ENCODE measurements at regions of chr14 and their contacts with region 1.

Region 1: GRCh38 chr14:77023001-77023996 is 5.2 kb downstream of the IRF2BPL start:
- DNase-seq: peak; percentile 70
- H3K4me3 ChIP-seq: peak overlapping the region; percentile 21 to 77; a peak in 3 of 4 replicates
- H3K27ac ChIP-seq: peak overlapping the region; percentile 74 to 96
- H3K4me1 ChIP-seq: peaks cover 26 to 30% of the 10 kb centered on the region in 2 experiments
- H3K27me3 ChIP-seq: no peaks in the 10 kb centered on the region
- CTCF ChIP-seq: peak; percentile 37; the same call in 1 of the 2 replicates
- EP300 ChIP-seq: no peak
- RAD21 ChIP-seq: peak; percentile 50

Region 2: GRCh38 chr14:76977793-76978720 is 45.2 kb before region 1 on chr14:
- CTCF ChIA-PET with region 1: no interaction called
- POLR2A ChIA-PET with region 1: no interaction called
- DNase-seq: peak; percentile 47
- H3K4me3 ChIP-seq: no peak overlapping the region
- H3K27ac ChIP-seq: peak overlapping the region in 1 of 2 experiments; percentile 28; a peak in 1 of 4 replicates
- H3K4me1 ChIP-seq: peaks cover 0 to 16% of the 10 kb centered on the region in 2 experiments; a peak in 1 of 4 replicates
- H3K27me3 ChIP-seq: no peaks in the 10 kb centered on the region
- CTCF ChIP-seq: no peak
- EP300 ChIP-seq: no peak
- RAD21 ChIP-seq: no peak

Region 3: DNA sequence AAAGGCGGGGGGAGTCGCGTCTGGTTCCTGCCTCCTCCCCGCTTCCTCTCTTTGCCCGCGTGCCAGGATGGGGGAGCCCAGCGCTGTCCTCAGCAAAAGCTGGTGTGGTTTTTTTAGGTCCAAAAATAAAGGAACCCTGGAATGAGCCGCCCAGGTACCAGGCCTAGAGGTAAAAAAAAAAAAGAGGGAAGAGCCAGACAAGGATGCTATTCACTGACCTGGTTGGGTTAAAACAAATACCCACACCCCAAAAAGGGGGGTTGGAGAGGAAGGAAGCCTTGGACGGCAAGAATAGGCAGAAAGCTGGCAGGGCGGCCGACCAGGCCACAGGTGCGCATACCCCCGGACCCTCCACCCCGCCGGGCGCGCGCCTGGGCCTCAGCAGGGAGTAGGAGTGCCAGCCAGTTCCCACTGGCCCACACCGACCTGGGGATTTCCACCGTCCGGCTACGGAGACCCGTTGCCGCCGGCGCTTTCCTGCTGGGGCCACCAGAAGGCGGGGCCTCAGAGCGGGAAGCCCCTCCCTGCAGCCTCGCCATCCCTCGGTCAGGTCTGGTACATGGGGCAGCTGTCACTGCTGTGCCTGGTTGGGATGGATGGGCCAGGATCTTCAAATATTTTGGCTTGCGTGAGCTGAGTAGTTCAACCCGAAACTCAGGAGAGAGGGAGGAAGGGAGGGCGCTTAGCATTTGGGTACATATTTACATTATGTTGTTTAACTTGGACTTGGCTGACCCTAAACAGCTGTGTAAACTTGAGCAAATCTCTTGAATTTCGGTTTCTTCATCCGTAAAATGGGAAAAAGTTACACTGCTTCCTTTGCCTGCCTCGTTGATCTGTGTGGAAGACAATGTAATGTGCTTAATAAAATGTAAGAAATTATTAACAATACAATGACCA is 10.6 kb after region 1 on chr14:
- CTCF ChIA-PET with region 1: interaction called, 13 read pairs
- POLR2A ChIA-PET with region 1: interaction called, 28 read pairs
- DNase-seq: peak; percentile 91
- H3K4me3 ChIP-seq: peak overlapping the region; percentile 52 to 64
- H3K27ac ChIP-seq: peak overlapping the region; percentile 97 to 99
- H3K4me1 ChIP-seq: peaks cover 58 to 59% of the 10 kb centered on the region in 2 experiments
- H3K27me3 ChIP-seq: no peaks in the 10 kb centered on the region
- CTCF ChIP-seq: no peak
- EP300 ChIP-seq: peak in 1 of 2 experiments; percentile 3; a peak in 2 of 4 replicates
- RAD21 ChIP-seq: no peak

Measured in SK-N-SH (cell line).